Ovary (tissue), 10 donors: ENCODE measurements at regions of chr18 and their contacts with region 1.

Region 1: DNA sequence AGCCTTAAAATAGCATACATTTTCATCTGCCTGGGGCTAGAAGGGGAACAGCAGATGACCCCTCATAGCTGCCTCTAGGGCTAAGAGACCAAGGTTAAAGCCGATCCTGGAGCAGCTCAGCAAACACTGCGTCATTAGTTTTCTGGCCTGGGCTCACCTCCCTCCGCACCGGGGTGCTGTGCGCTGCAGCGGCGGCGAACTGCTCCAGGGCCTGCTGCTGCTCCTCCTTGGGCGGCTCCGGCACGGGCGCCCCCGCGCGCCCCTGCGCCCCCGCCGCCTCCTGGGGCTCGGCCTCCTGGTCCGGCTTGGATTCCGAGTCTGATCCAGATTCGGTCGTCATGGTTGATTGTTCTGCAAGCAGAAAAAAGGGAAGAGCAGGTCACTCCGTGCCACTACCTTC is 55.0 kb downstream of the EPB41L3 start:
- DNase-seq: peak; percentile 36 to 49 (median 42)
- H3K4me3 ChIP-seq: peak overlapping the region; percentile 11
- H3K27ac ChIP-seq: no peak overlapping the region
- H3K4me1 ChIP-seq: no peaks in the 10 kb centered on the region
- H3K27me3 ChIP-seq: no peaks in the 10 kb centered on the region
- CTCF ChIP-seq: no peak
- EP300 ChIP-seq: no peak
- POLR2A ChIP-seq: no peak

Region 2: DNA sequence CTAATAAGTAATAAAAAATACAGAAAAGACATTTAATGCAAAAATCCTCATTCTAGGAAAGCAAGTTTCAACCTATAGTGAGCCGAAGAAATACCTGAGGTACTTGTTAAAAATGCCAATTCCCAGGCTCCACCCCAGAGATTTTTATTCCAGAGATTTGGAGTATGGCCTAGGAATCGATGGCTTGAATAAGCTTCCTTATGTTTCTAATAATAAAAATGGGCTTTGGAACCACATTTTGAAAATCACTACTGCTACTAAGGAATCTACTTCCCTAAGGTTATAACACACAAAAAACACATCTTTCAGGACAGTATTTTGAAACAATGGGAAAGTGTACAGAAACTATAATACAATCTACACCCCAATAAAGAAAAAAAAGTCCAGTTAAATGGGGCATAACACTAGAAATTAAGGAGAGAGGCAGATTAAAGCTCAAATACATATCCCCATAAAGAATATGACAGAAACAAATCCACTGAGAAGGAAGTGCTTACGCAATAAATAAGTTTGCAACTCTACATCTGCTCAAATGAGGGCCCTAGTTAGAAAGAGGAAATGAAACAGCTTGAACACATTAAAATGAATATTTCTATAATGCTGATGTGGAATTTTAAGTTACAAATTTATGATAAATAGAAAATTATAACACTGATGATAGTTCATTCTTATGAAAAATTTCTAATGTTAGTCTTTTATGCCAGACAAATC is 48.7 kb before region 1 on chr18:
- intact Hi-C with region 1: no loop called
- DNase-seq: no peak
- H3K4me3 ChIP-seq: no peak overlapping the region
- H3K27ac ChIP-seq: no peak overlapping the region
- H3K4me1 ChIP-seq: no peaks in the 10 kb centered on the region
- H3K27me3 ChIP-seq: no peaks in the 10 kb centered on the region
- CTCF ChIP-seq: no peak
- EP300 ChIP-seq: no peak
- POLR2A ChIP-seq: no peak

Region 3: DNA sequence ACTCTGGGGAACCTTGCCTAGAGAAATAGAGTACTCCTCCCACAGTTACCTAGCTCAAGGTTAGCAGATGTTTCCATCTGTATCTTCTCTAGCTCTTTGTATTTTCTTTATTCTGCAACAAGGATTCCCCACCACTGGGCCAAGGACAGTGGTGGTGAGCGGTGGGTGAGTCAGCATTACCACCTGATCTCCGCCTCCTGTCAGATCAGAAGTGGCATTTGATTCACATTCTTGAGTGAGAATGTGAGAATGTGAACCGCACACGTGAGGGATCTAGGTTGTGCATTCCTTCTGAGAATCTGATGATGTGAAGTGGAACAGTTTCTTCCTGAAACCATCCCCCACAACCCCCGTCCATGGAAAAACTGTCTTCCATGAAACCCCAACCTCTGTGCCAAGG is 46.0 kb after region 1 on chr18:
- intact Hi-C with region 1: loop called in 1 of 4 experiments (anchors 2 kb)
- DNase-seq: no peak
- H3K4me3 ChIP-seq: no peak overlapping the region
- H3K27ac ChIP-seq: no peak overlapping the region
- H3K4me1 ChIP-seq: no peaks in the 10 kb centered on the region
- H3K27me3 ChIP-seq: no peaks in the 10 kb centered on the region
- CTCF ChIP-seq: no peak
- EP300 ChIP-seq: no peak
- POLR2A ChIP-seq: no peak